Mammary epithelial cell (primary cell): ENCODE measurements at regions of chr5 and their contacts with region 1.

Region 1: GRCh38 chr5:55711968-55712859 is at the start of gene SLC38A9:
- DNase-seq: peak; percentile 91
- H3K4me3 ChIP-seq: peak within 1 kb of the TSS; percentile 66 to 99 (median 98)
- H3K27ac ChIP-seq: peak within 1 kb of the TSS; percentile 75
- H3K4me1 ChIP-seq: peaks cover 18% of the 10 kb centered on the region
- H3K27me3 ChIP-seq: no peaks in the 10 kb centered on the region
- CTCF ChIP-seq: no peak
- total RNA-seq, gene SLC38A9: 23.0 to 62.5 TPM

Region 2: GRCh38 chr5:55450050-55450765 is 262.0 kb before region 1 on chr5:
- CTCF ChIA-PET with region 1: no interaction called
- dilution Hi-C with region 1: no loop called
- in situ Hi-C with region 1: no loop called
- intact Hi-C with region 1: no loop called
- DNase-seq: peak; percentile 16
- H3K4me3 ChIP-seq: no peak overlapping the region
- H3K27ac ChIP-seq: no peak overlapping the region
- H3K4me1 ChIP-seq: no peaks in the 10 kb centered on the region
- H3K27me3 ChIP-seq: no peaks in the 10 kb centered on the region
- CTCF ChIP-seq: no peak

Region 3: DNA sequence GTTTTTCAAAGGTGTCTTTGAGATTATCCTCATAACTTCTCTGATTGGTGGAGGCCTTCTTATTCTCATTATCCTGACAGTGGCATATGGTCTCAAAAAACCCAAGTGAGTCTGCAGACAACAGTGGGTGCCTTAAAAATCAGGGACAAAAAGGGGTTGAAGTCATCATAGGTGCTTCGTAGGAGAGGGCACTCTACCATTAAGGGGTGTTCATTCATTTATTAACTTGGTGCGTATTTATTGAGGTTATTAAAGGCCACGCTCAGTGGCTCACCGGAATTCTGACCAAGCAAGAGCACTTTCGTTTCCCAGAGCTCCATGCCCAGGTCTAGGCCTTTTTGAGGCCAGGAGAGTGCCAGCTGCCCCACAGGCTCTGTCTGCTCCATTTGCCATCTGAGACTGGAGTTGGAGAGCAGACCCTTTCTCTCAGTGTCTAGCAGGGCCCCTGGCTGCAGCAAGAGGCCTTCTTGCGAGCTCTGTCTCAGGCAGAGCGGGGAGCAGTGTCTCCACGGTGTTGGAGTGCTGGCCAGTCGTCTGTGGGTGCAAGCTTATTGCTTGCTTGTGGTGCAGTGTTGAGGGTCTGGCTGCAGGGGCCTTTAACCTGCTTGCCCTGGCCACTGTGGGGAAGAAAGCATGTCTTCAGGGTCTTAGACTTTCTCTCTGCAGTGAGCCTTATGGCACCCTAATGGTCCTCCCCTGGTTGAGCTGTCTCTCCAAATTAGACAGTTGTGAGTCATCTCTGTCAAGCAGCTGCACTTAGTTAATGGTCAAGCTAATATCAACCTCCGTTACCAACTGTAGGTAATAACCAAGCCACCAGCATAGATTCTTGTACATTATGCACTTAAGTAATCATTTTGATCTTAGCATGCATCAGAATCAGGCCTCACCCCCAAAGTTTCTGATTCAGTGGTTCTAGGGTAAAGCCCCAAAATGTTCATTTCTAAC is 201.5 kb after region 1 on chr5:
- CTCF ChIA-PET with region 1: interaction called, 5 read pairs
- dilution Hi-C with region 1: no loop called
- in situ Hi-C with region 1: loop called in 1 of 2 experiments (anchors 25 kb)
- intact Hi-C with region 1: loop called (anchors 5 kb)
- DNase-seq: no peak
- H3K4me3 ChIP-seq: no peak overlapping the region
- H3K27ac ChIP-seq: no peak overlapping the region
- H3K4me1 ChIP-seq: no peaks in the 10 kb centered on the region
- H3K27me3 ChIP-seq: no peaks in the 10 kb centered on the region
- CTCF ChIP-seq: no peak